A549 (cell line): ENCODE measurements at regions of chr5 and their contacts with region 1.

Region 1: GRCh38 chr5:149561848-149562247 is 10.6 kb upstream of the CSNK1A1 start:
- DNase-seq: peak; percentile 75 to 88
- ATAC-seq: peak; percentile 81 to 83
- H3K4me3 ChIP-seq: peak overlapping the region; percentile 7; the same call in 2 of the 3 replicates
- H3K27ac ChIP-seq: peak overlapping the region; percentile 90 to 91
- H3K4me1 ChIP-seq: peaks cover 39% of the 10 kb centered on the region
- CTCF ChIP-seq: no peak
- EP300 ChIP-seq: no peak
- POLR2A ChIP-seq: no peak
- RAD21 ChIP-seq: peak in 1 of 2 experiments; percentile 12; a peak in 1 of 5 replicates

Region 2: GRCh38 chr5:149367249-149367971 is 194.4 kb before region 1 on chr5:
- CTCF ChIA-PET with region 1: interaction called, 29 read pairs
- POLR2A ChIA-PET with region 1: no interaction called
- DNase-seq: peak; percentile 82 to 96
- ATAC-seq: peak; percentile 71 to 91
- H3K4me3 ChIP-seq: no peak overlapping the region
- H3K27ac ChIP-seq: no peak overlapping the region
- H3K4me1 ChIP-seq: peaks cover 4% of the 10 kb centered on the region; the same call in 1 of the 3 replicates
- CTCF ChIP-seq: peak; percentile 84
- EP300 ChIP-seq: no peak
- POLR2A ChIP-seq: no peak
- RAD21 ChIP-seq: peak; percentile 69 to 79

Region 3: GRCh38 chr5:149434162-149435014 is 127.5 kb before region 1 on chr5:
- CTCF ChIA-PET with region 1: interaction called, 209 read pairs
- POLR2A ChIA-PET with region 1: no interaction called
- DNase-seq: peak; percentile 61 to 88
- ATAC-seq: peak; percentile 56 to 72
- H3K4me3 ChIP-seq: no peak overlapping the region
- H3K27ac ChIP-seq: 0 out of 6 replicates have a peak overlapping the region, but pooled peaks of 1 of the 2 experiments have one; percentile 9
- H3K4me1 ChIP-seq: peaks cover 13% of the 10 kb centered on the region
- CTCF ChIP-seq: peak; percentile 86
- EP300 ChIP-seq: no peak
- POLR2A ChIP-seq: no peak
- RAD21 ChIP-seq: peak; percentile 74

Region 4: DNA sequence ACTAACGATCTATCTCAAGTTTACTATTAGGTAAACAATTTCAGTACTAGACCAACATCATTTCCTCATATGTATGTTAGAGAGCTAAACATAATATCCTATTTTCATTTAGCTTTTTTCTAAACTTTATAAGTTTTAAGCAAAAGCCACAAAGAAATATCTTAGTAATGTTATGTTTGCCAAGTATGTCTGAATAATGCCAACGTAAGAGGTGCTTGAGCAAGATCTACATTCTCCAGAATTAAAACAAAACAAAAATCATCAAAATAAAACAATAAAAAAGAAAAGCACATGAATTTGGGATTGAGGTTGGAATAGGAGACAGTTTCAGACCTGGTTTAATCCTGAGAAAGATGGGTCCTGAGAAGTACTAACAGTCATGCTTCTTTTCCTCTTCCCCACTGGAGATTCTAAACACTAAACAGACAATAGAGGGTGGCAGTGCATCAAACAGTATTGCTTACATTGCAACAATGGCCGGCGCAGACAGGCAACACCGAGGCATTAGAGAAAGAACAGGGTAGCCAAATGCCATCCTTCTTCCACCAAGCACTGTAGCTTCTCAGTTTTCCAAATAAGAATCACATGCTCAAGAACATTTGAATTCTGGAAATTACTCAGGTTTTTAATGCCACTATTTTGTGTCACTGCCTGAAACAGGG is 44.3 kb before region 1 on chr5:
- CTCF ChIA-PET with region 1: interaction called, 12 read pairs
- POLR2A ChIA-PET with region 1: no interaction called
- DNase-seq: peak in 1 of 2 experiments; percentile 13
- ATAC-seq: peak; percentile 19 to 73; a peak in 3 of 6 replicates
- H3K4me3 ChIP-seq: no peak overlapping the region
- H3K27ac ChIP-seq: 0 out of 6 replicates have a peak overlapping the region, but pooled peaks of 1 of the 2 experiments have one; percentile 8
- H3K4me1 ChIP-seq: peaks cover 60% of the 10 kb centered on the region
- CTCF ChIP-seq: no peak
- EP300 ChIP-seq: no peak
- POLR2A ChIP-seq: no peak
- RAD21 ChIP-seq: no peak

Region 5: DNA sequence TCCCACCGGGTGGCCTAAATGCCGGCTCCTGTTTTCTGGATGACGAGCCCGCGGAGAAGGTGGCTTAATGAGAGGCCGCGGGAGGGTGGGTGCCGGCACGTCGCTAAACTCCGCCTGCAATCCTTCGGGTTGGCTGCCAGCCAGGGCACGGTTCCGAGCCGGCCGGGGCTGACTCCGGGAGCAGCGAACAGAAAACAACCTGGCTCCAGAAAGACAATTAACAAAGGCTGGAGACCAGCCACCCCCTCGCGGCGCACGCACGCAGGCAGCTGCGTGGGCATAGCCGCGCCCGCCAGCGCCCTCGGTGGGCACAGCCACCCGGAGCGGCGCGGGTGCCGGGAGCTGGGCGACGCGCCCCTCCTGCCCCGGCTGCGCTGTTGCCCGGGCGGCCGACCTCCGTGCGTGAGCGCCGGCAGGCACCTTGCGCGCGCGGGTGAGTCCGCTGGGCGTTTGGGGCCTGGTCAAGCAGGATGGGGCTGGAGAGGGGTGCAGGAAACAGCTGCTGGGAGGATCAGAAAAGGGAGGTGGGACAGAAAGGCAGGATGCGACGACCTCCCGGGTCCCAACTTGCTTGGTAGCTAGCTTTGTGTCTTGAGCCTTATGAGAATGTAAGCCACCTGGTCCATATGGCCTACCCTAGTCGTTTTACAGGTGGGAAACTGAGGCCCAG is 19.5 kb after region 1 on chr5 and contains the start of gene ARHGEF37:
- CTCF ChIA-PET with region 1: interaction called, 28 read pairs
- POLR2A ChIA-PET with region 1: interaction called, 3 read pairs
- DNase-seq: peak in 1 of 2 experiments; percentile 42
- ATAC-seq: peak; percentile 90
- H3K4me3 ChIP-seq: peak within 1 kb of the TSS; percentile 58
- H3K27ac ChIP-seq: peak within 1 kb of the TSS; percentile 79 to 83
- H3K4me1 ChIP-seq: peaks cover 15% of the 10 kb centered on the region; the same call in 2 of the 3 replicates
- CTCF ChIP-seq: no peak
- EP300 ChIP-seq: no peak
- POLR2A ChIP-seq: peak; percentile 14; the same call in 1 of the 2 replicates
- RAD21 ChIP-seq: no peak
- polyA plus RNA-seq, gene ARHGEF37: 1.5 and 1.7 TPM in 2 replicates

Region 6: DNA sequence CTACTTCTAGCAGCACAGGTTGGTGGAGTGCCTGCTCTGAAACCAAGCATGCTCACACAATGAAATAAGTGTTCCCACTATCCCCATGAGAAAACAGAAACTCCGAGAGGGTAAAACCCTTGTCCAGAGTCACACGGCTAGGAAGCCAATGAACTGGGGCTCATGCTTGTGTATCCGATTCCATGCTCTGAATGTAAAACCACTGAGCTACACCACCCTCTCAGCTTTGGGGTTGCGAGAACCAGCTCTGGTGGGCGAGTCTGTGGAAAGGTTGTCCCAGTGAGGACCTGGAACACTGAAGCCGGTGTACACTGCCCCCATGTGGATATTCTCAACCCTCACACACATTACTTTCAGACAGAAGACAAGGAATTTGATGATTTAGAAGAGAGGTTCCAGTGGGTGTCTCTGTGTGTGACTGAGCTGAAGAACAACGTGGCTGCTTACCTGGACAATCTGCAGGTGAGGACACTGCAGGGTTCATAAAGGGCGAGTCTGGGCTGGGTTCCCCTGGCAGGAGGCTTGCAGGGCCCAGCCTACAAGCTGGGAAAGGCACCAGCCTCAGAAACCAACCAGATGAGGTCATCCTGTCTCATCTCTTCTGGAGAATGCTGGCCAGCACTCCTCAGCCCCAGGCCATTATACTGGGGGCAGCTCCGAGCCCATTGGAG is 56.9 kb after region 1 on chr5:
- CTCF ChIA-PET with region 1: interaction called, 23 read pairs
- POLR2A ChIA-PET with region 1: no interaction called
- DNase-seq: peak; percentile 73 to 75
- ATAC-seq: peak; percentile 86 to 96
- H3K4me3 ChIP-seq: no peak overlapping the region
- H3K27ac ChIP-seq: peak overlapping the region; percentile 14 to 33; a peak in 1 of 6 replicates
- H3K4me1 ChIP-seq: peaks cover 9% of the 10 kb centered on the region; the same call in 1 of the 3 replicates
- CTCF ChIP-seq: peak; percentile 90
- EP300 ChIP-seq: no peak
- POLR2A ChIP-seq: no peak
- RAD21 ChIP-seq: peak; percentile 83 to 89